Heart left ventricle (tissue), 16 donors: ENCODE measurements at regions of chr1 and their contacts with region 1.

Region 1: GRCh38 chr1:182604169-182605164 is at the start of gene RGS16:
- DNase-seq: peak; percentile 96 to 97 (median 96)
- ATAC-seq: peak; percentile 96 to 98 (median 98)
- H3K4me3 ChIP-seq: peak within 1 kb of the TSS; percentile 33 to 94 (median 60)
- H3K27ac ChIP-seq: peak within 1 kb of the TSS in 11 of 12 donors; percentile 16 to 76 (median 52)
- H3K4me1 ChIP-seq: peaks cover 0 to 58% (median 21%) of the 10 kb centered on the region in 12 donors
- H3K27me3 ChIP-seq: no peaks in the 10 kb centered on the region
- CTCF ChIP-seq: no peak
- POLR2A ChIP-seq: peak; percentile 7 to 92
- total RNA-seq, gene RGS16: 0.75 to 9.3 (median 2.0) TPM

Region 2: DNA sequence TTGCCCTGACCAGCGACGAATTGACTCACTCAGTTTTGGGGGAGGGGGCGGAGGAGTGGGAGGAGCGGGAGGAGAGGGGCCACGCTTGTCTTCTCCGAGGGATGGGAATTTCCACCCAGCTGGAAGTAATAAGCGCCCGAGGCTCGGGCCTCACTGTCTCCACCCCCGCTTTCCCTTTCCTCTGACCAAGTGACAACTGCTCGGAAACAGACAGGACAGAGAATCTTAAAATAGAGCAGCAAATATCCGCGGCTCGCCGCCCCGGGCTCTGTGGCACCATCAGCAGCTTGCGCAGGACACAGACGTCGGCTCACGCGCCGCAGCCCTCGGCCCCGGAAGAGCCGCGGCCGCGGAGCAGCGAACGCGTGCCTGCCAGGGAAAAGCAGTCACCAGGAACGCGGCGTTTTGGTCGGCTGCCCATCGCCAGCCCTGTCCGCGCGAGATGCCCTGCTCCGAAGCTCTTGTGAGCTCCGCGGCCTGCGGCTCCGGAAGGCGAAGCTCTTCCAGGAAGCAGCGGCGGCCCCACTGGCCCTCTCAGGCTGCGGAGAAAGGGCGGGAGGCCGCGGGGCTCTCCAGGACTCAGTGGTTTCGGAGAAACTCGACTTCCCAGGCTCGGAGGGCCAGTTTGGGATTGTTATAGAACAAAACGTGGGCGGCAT is 10.5 kb after region 1 on chr1:
- intact Hi-C with region 1: loop called in 1 of 10 experiments (anchors 1 kb)
- DNase-seq: peak; percentile 89 to 92 (median 89)
- ATAC-seq: peak; percentile 84 to 94 (median 92)
- H3K4me3 ChIP-seq: peak overlapping the region; percentile 19 to 63 (median 56)
- H3K27ac ChIP-seq: peak overlapping the region; percentile 86 to 99 (median 94)
- H3K4me1 ChIP-seq: peaks cover 7 to 37% (median 26%) of the 10 kb centered on the region in 12 donors
- H3K27me3 ChIP-seq: peaks cover 0 to 10% (median 0%) of the 10 kb centered on the region in 9 donors
- CTCF ChIP-seq: no peak
- POLR2A ChIP-seq: peak in 1 of 2 donors; percentile 72

Region 3: GRCh38 chr1:182629499-182630096 is 25.1 kb after region 1 on chr1:
- intact Hi-C with region 1: no loop called
- DNase-seq: no peak
- ATAC-seq: no peak
- H3K4me3 ChIP-seq: no peak overlapping the region
- H3K27ac ChIP-seq: no peak overlapping the region
- H3K4me1 ChIP-seq: peaks cover 0 to 39% (median 13%) of the 10 kb centered on the region in 12 donors
- H3K27me3 ChIP-seq: no peaks in the 10 kb centered on the region
- CTCF ChIP-seq: no peak
- POLR2A ChIP-seq: no peak